ENCODE measurements at regions of chr1 and their contacts with region 1.

Region 1: GRCh38 chr1:29181413-29182225 is at the start of gene SRSF4:
- DNase-seq: peak; percentile 98
- H3K4me3 ChIP-seq: peak within 1 kb of the TSS; percentile 77 to 92 (median 91)
- H3K27ac ChIP-seq: peak within 1 kb of the TSS; percentile 92
- H3K4me1 ChIP-seq: peaks cover 21% of the 10 kb centered on the region
- H3K27me3 ChIP-seq: no peaks in the 10 kb centered on the region
- CTCF ChIP-seq: peak; percentile 40 to 75
- total RNA-seq, gene SRSF4: 22.5 to 93.1 TPM

Region 2: DNA sequence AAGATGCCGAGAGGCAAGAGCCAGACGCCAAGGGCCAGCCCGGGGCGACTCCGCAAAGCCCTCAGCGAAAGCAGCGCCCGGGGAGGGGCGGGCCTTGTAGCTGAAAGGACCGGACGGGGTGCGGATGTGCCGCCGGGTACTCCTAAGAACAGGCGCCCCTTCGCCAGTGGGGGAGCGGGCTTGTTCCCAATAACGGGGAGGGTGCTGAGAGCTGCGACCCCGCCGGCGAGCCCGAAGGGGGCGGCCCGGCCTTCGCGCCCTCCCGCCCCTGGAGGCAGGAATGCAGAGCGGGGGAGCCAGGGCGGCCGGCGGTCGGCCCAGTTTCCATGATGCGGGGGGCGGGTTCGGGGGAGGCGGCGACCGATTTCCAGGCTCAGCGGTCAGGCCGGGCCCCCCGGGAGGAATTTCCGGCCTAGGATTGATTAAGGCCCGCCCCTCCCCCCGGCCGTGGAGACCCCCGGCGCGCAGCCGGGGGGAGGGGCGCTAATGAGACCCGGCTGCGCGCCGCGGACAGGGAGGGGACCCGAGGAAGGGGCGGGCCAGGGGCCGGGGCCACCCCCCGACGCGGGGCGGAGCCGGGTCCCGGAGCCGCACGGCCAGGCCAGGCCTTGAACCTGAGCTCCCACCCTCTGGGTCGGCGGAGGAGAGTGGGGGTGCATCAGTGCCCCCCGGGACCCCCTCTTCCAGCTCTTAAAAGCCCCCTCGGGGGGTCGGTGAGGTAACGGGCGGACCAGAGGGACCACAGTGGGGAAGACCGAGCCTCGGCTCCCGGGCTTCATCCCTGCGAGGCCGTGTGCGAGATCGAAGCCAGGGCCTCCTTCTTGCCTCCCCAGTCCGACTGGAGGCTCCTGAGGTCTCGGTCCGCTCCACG is 57.0 kb before region 1 on chr1:
- CTCF ChIA-PET with region 1: interaction called, 46 read pairs
- dilution Hi-C with region 1: no loop called
- in situ Hi-C with region 1: no loop called
- intact Hi-C with region 1: no loop called
- DNase-seq: peak; percentile 39
- H3K4me3 ChIP-seq: peak overlapping the region; percentile 50 to 57 (median 52)
- H3K27ac ChIP-seq: no peak overlapping the region
- H3K4me1 ChIP-seq: peaks cover 20% of the 10 kb centered on the region
- H3K27me3 ChIP-seq: peaks cover 11% of the 10 kb centered on the region
- CTCF ChIP-seq: peak; percentile 17 to 61

Region 3: DNA sequence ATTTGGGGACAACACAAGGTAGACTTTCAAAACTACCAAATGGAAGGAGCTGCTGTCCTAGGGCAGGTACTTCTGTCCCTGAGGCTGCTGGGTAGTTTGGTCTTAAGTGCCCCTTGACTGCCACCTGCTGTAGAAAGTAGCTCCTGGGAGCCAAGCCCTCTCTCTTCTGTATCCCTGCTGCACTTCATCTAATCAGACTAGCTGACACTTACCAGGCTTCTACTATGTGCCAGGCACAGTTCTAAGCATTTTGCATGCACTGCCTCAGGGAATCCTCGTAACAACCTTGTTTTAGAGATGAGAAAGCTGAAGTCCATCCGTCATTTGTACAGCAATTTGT is 15.9 kb after region 1 on chr1:
- CTCF ChIA-PET with region 1: interaction called, 4 read pairs
- dilution Hi-C with region 1: no loop called
- in situ Hi-C with region 1: no loop called
- intact Hi-C with region 1: loop called (anchors 1 kb)
- DNase-seq: peak; percentile 36
- H3K4me3 ChIP-seq: no peak overlapping the region
- H3K27ac ChIP-seq: no peak overlapping the region
- H3K4me1 ChIP-seq: peaks cover 26% of the 10 kb centered on the region
- H3K27me3 ChIP-seq: no peaks in the 10 kb centered on the region
- CTCF ChIP-seq: peak; percentile 66 to 71

Region 4: DNA sequence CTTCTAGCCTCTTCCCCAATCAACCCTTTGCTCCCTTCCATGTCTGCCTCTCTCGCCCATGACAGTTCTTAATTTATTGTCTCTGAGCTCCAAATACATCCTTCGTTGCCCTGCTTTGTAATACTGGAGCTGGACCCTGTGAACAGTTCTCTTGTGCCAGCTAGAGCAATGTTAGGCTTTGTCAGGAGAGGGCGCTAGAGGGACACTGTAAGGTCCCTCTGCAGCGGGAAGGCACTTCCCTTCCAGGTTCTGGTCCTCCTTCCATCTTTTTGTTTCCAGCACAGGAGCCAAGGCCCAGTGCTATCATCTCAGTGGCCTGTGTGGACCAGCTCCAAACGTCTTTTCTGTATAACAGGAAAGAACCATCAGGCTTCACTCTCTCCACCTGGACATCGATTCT is 150.6 kb after region 1 on chr1:
- CTCF ChIA-PET with region 1: no interaction called
- dilution Hi-C with region 1: no loop called
- in situ Hi-C with region 1: no loop called
- intact Hi-C with region 1: no loop called
- DNase-seq: peak; percentile 14
- H3K4me3 ChIP-seq: no peak overlapping the region
- H3K27ac ChIP-seq: no peak overlapping the region
- H3K4me1 ChIP-seq: no peaks in the 10 kb centered on the region
- H3K27me3 ChIP-seq: no peaks in the 10 kb centered on the region
- CTCF ChIP-seq: peak; percentile 40 to 54